ENCODE measurements at regions of chr6 and their contacts with region 1.

Region 1: DNA sequence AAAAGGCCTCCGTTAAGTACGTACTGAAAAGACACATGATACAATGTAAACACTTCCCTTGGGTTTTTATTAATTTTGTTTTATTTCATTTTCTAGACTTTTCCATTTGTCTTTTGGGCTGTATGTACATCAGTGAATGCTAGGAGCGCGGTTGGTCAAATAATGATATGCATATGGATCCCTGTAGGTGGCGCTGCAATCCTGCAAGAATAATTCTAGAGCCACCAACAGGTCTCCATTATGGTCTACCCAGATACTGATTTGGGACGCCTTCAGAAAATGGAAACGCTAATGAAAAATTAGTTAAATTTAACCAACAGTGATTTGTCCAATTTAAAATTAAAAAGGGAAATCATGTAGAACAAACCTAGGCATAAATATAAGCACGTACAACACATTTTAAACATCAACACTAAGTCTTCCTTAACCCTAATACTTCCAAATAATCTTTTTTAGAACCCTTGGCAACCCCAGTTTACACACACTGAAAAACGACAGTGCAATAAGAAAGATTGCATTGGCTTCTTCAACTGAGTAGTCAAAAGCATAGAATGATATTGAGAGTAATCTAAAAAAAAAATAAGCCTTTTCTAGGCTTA is 433.5 kb downstream of the RFPL4B start:
- DNase-seq: peak; percentile 26
- H3K4me3 ChIP-seq: no peak overlapping the region
- H3K27ac ChIP-seq: no peak overlapping the region
- H3K4me1 ChIP-seq: no peaks in the 10 kb centered on the region
- H3K27me3 ChIP-seq: no peaks in the 10 kb centered on the region
- CTCF ChIP-seq: peak; percentile 64 to 67 (median 65)

Region 2: GRCh38 chr6:112360498-112360897 is 420.1 kb before region 1 on chr6:
- dilution Hi-C with region 1: no loop called
- DNase-seq: no peak
- H3K4me3 ChIP-seq: no peak overlapping the region
- H3K27ac ChIP-seq: no peak overlapping the region
- H3K4me1 ChIP-seq: no peaks in the 10 kb centered on the region
- H3K27me3 ChIP-seq: no peaks in the 10 kb centered on the region
- CTCF ChIP-seq: no peak

Region 3: GRCh38 chr6:112539355-112539754 is 241.2 kb before region 1 on chr6:
- dilution Hi-C with region 1: no loop called
- DNase-seq: no peak
- H3K4me3 ChIP-seq: no peak overlapping the region
- H3K27ac ChIP-seq: no peak overlapping the region
- H3K4me1 ChIP-seq: no peaks in the 10 kb centered on the region
- H3K27me3 ChIP-seq: no peaks in the 10 kb centered on the region
- CTCF ChIP-seq: no peak

Region 4: DNA sequence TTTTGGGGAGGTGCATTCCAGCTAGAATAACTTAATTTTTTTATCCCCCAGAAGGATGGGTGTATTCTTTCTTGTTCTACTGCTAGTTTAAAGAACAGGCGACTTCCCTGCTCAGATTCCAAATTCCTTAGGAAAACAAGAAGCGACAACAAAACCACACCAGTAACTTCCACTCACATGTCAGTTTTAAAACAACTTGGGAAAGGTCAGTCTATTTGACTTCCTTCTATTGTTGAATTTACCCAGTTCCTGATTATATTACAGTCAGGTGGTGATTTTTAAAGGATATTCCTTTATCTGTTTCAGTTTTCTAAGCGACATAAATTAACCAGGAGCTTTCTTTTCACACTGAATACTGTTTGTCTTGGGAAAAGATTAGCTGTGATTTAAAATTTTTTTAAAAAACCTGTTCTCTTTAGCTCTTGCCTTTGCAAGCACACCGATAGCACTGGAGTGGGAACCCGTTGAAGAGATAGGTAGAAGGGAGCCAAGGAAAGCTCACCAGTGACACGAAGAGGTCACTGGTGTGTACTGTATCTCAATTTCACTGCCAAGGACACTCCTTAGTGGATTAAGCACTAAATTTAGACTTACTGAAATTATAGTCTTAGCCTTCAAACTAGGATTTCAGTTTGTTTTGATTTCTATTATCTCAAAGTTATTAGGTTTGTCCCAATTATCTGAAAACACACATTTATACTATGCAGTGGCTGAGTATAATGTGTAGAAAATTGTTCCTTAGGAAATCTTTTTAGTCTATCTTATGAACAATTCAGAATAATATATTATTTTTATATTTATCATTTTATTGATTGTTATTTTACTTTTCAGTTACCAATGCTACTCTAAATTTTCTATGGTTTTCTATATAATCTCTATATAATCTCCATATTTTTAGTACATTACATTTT is 1098.8 kb after region 1 on chr6:
- dilution Hi-C with region 1: loop called (anchors 25 kb)
- DNase-seq: no peak
- H3K4me3 ChIP-seq: no peak overlapping the region
- H3K27ac ChIP-seq: no peak overlapping the region
- H3K4me1 ChIP-seq: peaks cover 5% of the 10 kb centered on the region
- H3K27me3 ChIP-seq: no peaks in the 10 kb centered on the region
- CTCF ChIP-seq: peak; percentile 78 to 89 (median 78)